Common myeloid progenitor, CD34-positive (primary cell): ENCODE measurements at regions of chr11 and their contacts with region 1.

Region 1: DNA sequence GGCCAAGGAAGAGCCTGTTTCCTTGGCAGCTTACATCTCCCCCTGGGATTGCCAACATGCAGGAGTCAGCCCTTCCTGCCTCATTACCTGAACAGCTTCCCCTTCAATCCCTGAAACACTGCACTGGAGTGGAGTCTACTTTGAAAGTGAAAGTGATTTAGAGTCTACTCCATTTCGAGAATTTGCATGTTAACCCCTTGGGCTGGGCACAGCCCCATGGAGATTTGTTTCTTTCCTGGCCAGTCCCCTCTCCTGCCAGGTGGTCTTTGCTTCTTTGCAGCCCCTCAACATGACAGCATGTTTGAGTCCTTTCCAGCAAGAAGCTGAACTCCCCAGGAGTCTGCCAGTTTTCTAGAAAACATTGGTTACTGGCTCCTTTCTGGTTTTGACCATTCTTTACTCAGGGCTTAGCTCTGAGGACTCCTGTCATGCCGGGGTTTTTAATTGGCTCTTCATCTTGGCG is 59.9 kb downstream of the TRAF6 start:
- DNase-seq: peak; percentile 21 to 57 (median 48)
- H3K4me3 ChIP-seq: peak overlapping the region in 6 of 7 experiments; percentile 12 to 74 (median 38)
- H3K27ac ChIP-seq: peak overlapping the region; percentile 0 to 27
- H3K4me1 ChIP-seq: peaks cover 28 to 64% (median 61%) of the 10 kb centered on the region in 4 experiments
- H3K27me3 ChIP-seq: no peaks in the 10 kb centered on the region

Region 2: GRCh38 chr11:36306888-36307287 is 143.3 kb before region 1 on chr11:
- CTCF ChIA-PET with region 1: no interaction called
- POLR2A ChIA-PET with region 1: no interaction called
- DNase-seq: peak; percentile 68 to 80 (median 74)
- H3K4me3 ChIP-seq: no peak overlapping the region
- H3K27ac ChIP-seq: no peak overlapping the region
- H3K4me1 ChIP-seq: peaks cover 0 to 5% (median 0%) of the 10 kb centered on the region in 4 experiments
- H3K27me3 ChIP-seq: no peaks in the 10 kb centered on the region

Region 3: GRCh38 chr11:36385121-36385970 is 64.8 kb before region 1 on chr11:
- CTCF ChIA-PET with region 1: no interaction called
- POLR2A ChIA-PET with region 1: no interaction called
- DNase-seq: peak in 1 of 3 donors; percentile 31
- H3K4me3 ChIP-seq: no peak overlapping the region
- H3K27ac ChIP-seq: no peak overlapping the region
- H3K4me1 ChIP-seq: peaks cover 6 to 35% (median 22%) of the 10 kb centered on the region in 4 experiments
- H3K27me3 ChIP-seq: no peaks in the 10 kb centered on the region

Region 4: DNA sequence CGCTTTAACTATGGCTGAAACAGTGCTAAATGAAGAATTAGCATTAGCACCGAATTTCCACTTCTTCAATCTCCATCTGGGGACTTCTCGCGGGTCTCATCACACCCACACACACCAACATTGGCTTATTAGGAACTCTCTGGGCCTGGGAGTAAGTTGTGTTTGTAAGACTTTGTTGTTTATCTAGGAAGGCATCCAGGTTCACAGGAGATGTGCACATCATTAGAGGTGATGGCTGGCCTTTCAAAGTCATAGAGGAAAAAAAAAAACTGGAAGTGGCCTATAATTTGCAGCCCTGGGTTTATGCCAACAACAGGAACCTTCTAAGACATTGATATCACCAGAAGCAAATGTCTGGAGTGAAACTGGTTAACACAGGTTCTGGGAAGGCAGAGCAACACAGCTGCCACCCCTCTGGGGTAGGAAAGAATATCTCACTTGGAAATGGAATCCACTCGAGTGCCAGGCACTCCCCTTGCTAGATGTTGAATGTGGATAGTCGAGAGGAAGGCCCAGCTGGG is 24.5 kb before region 1 on chr11:
- CTCF ChIA-PET with region 1: interaction called, 11 read pairs
- POLR2A ChIA-PET with region 1: interaction called, 4 read pairs
- DNase-seq: peak in 1 of 3 donors; percentile 20
- H3K4me3 ChIP-seq: no peak overlapping the region
- H3K27ac ChIP-seq: no peak overlapping the region
- H3K4me1 ChIP-seq: peaks cover 20 to 43% (median 31%) of the 10 kb centered on the region in 4 experiments
- H3K27me3 ChIP-seq: no peaks in the 10 kb centered on the region

Region 5: GRCh38 chr11:36463781-36464180 is 13.6 kb after region 1 on chr11:
- CTCF ChIA-PET with region 1: interaction called, 11 read pairs
- POLR2A ChIA-PET with region 1: no interaction called
- DNase-seq: no peak
- H3K4me3 ChIP-seq: no peak overlapping the region
- H3K27ac ChIP-seq: no peak overlapping the region
- H3K4me1 ChIP-seq: peaks cover 0 to 8% (median 0%) of the 10 kb centered on the region in 4 experiments
- H3K27me3 ChIP-seq: no peaks in the 10 kb centered on the region